CD4-positive, alpha-beta T cell (primary cell): ENCODE measurements at regions of chr11 and their contacts with region 1.

Region 1: DNA sequence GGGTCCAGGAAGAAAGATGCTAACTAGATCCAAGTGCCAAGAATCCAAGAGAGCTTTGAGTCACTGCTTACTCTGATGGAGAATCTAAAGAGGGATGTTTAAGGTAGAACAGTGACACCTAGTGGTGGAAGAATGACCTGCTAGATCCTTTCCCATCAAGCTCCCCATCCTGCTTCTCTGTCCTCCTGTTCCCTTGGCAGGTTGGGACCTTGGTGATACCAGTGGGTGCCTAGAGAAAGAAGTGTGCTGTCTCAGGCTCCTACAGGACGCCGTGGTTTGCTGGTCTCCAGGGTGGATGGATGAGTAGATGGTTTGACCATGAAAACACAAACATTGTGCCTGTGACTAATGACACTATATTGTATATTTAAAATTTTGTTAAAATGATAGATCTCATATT is 383.7 kb downstream of the TMEM135 start:
- DNase-seq: peak in 6 of 14 experiments; percentile 1 to 73 (median 42)
- ATAC-seq: no peak
- H3K4me3 ChIP-seq: no peak overlapping the region
- H3K4me3 Mint-ChIP-seq: no peak overlapping the region
- H3K27ac ChIP-seq: no peak overlapping the region
- H3K27ac Mint-ChIP-seq: no peak overlapping the region
- H3K4me1 ChIP-seq: no peaks in the 10 kb centered on the region
- H3K4me1 Mint-ChIP-seq: no peaks in the 10 kb centered on the region
- H3K27me3 ChIP-seq: no peaks in the 10 kb centered on the region
- H3K27me3 Mint-ChIP-seq: no peaks in the 10 kb centered on the region
- CTCF ChIP-seq: peak; percentile 81

Region 2: GRCh38 chr11:86869966-86870570 is 551.4 kb before region 1 on chr11:
- CTCF ChIA-PET with region 1: no interaction called
- POLR2A ChIA-PET with region 1: no interaction called
- intact Hi-C with region 1: loop called in 1 of 2 experiments (anchors 10 kb)
- DNase-seq: peak; percentile 1 to 50 (median 10)
- ATAC-seq: peak; percentile 44
- H3K4me3 ChIP-seq: no peak overlapping the region
- H3K4me3 Mint-ChIP-seq: no peak overlapping the region
- H3K27ac ChIP-seq: no peak overlapping the region
- H3K27ac Mint-ChIP-seq: no peak overlapping the region
- H3K4me1 ChIP-seq: no peaks in the 10 kb centered on the region
- H3K4me1 Mint-ChIP-seq: no peaks in the 10 kb centered on the region
- H3K27me3 ChIP-seq: no peaks in the 10 kb centered on the region
- H3K27me3 Mint-ChIP-seq: no peaks in the 10 kb centered on the region
- CTCF ChIP-seq: peak; percentile 69

Region 3: GRCh38 chr11:86938900-86939880 is 482.2 kb before region 1 on chr11:
- CTCF ChIA-PET with region 1: interaction called, 10 read pairs
- POLR2A ChIA-PET with region 1: no interaction called
- intact Hi-C with region 1: loop called in 1 of 2 experiments (anchors 1 kb)
- DNase-seq: peak in 3 of 14 experiments; percentile 53 to 60 (median 53)
- ATAC-seq: peak; percentile 46
- H3K4me3 ChIP-seq: no peak overlapping the region
- H3K4me3 Mint-ChIP-seq: no peak overlapping the region
- H3K27ac ChIP-seq: no peak overlapping the region
- H3K27ac Mint-ChIP-seq: no peak overlapping the region
- H3K4me1 ChIP-seq: no peaks in the 10 kb centered on the region
- H3K4me1 Mint-ChIP-seq: no peaks in the 10 kb centered on the region
- H3K27me3 ChIP-seq: no peaks in the 10 kb centered on the region
- H3K27me3 Mint-ChIP-seq: peaks cover 4% of the 10 kb centered on the region
- CTCF ChIP-seq: peak; percentile 71

Region 4: GRCh38 chr11:87352759-87353707 is 68.4 kb before region 1 on chr11:
- CTCF ChIA-PET with region 1: interaction called, 6 read pairs
- POLR2A ChIA-PET with region 1: no interaction called
- intact Hi-C with region 1: loop called (anchors 1 kb)
- DNase-seq: peak; percentile 60 to 88 (median 78)
- ATAC-seq: peak; percentile 95
- H3K4me3 ChIP-seq: no peak overlapping the region
- H3K4me3 Mint-ChIP-seq: no peak overlapping the region
- H3K27ac ChIP-seq: no peak overlapping the region
- H3K27ac Mint-ChIP-seq: no peak overlapping the region
- H3K4me1 ChIP-seq: peaks cover 9% of the 10 kb centered on the region
- H3K4me1 Mint-ChIP-seq: peaks cover 12% of the 10 kb centered on the region
- H3K27me3 ChIP-seq: no peaks in the 10 kb centered on the region
- H3K27me3 Mint-ChIP-seq: peaks cover 13% of the 10 kb centered on the region
- CTCF ChIP-seq: peak; percentile 96

Region 5: DNA sequence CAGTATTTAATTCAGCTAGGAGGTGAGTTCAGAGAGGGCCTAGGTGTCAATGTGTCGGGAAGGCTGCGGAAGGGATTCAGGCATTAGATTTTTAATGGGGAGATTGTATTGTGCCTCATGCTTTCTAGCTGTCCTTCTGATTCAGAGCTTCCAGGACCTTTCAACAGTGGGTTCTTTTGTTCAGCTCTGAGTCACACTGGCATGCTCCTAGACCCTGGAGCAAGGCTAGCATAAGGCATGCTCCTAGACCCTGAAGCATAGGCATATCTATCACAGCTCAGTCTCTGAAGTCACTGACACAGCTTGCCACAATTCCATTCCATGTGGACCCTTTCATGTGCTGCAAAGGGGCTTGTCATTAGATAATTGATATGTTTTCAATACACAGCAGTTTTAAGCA is 356.9 kb after region 1 on chr11:
- CTCF ChIA-PET with region 1: no interaction called
- POLR2A ChIA-PET with region 1: no interaction called
- intact Hi-C with region 1: no loop called
- DNase-seq: no peak
- ATAC-seq: no peak
- H3K4me3 ChIP-seq: no peak overlapping the region
- H3K4me3 Mint-ChIP-seq: no peak overlapping the region
- H3K27ac ChIP-seq: no peak overlapping the region
- H3K27ac Mint-ChIP-seq: no peak overlapping the region
- H3K4me1 ChIP-seq: no peaks in the 10 kb centered on the region
- H3K4me1 Mint-ChIP-seq: no peaks in the 10 kb centered on the region
- H3K27me3 ChIP-seq: no peaks in the 10 kb centered on the region
- H3K27me3 Mint-ChIP-seq: no peaks in the 10 kb centered on the region
- CTCF ChIP-seq: no peak